CD8-positive, alpha-beta T cell (primary cell): ENCODE measurements at regions of chr5 and their contacts with region 1.

Region 1: GRCh38 chr5:33969572-33970452 is 14.7 kb downstream of the SLC45A2 start:
- DNase-seq: peak in 2 of 9 experiments; percentile 13 to 36
- ATAC-seq: no peak
- H3K4me3 ChIP-seq: no peak overlapping the region
- H3K4me3 Mint-ChIP-seq: no peak overlapping the region
- H3K27ac ChIP-seq: no peak overlapping the region
- H3K27ac Mint-ChIP-seq: no peak overlapping the region
- H3K4me1 ChIP-seq: no peaks in the 10 kb centered on the region
- H3K4me1 Mint-ChIP-seq: peaks cover 7% of the 10 kb centered on the region
- H3K27me3 ChIP-seq: no peaks in the 10 kb centered on the region
- H3K27me3 Mint-ChIP-seq: peaks cover under 1% of the 10 kb centered on the region
- CTCF ChIP-seq: peak; percentile 49

Region 2: DNA sequence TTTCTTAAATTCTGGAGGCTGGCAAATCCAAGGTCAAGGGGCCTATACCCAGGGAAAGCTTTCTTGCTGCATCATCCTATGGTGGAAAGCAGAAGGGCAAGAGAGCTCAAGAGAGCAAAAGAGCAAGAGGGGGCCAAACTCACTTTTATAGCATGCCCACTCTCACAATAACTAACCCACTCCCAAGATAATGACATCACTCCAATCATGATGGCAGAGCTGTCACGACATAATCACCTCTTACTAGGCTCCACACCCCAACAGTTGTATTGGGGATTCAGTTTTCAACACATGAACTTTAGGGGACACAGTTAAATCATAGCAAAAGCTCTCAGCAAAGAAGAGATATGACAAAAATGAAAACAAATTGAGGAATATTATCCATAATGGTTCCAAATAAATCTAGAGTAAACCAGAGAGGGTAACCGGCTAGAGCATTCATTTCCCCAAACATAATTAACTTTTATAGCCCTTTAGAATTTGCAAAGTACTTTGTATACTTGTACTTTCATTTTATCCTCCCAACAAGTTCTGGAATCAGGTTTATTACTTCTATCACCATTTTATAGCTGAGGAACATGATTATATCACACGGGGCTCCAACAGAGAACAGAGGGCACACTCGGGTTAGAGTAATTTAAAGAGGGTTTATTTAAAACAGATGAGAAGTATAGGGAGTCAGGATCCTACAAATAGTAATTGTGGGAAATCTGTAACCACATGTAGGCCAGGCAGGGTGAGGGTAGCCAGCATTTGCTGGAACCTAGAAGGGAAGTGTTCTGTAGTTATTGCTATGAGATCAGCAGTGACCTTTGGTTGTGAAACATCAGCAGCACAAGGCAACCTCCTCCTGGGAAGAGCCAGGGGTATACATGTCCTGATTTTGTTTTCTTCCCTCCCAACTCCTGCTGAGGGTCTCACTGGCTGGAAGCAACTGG is 536.2 kb before region 1 on chr5:
- CTCF ChIA-PET with region 1: interaction called, 21 read pairs
- POLR2A ChIA-PET with region 1: no interaction called
- intact Hi-C with region 1: loop called in 1 of 2 experiments (anchors 1 kb)
- DNase-seq: no peak
- ATAC-seq: no peak
- H3K4me3 ChIP-seq: no peak overlapping the region
- H3K4me3 Mint-ChIP-seq: no peak overlapping the region
- H3K27ac ChIP-seq: no peak overlapping the region
- H3K27ac Mint-ChIP-seq: no peak overlapping the region
- H3K4me1 ChIP-seq: no peaks in the 10 kb centered on the region
- H3K4me1 Mint-ChIP-seq: peaks cover 11% of the 10 kb centered on the region
- H3K27me3 ChIP-seq: no peaks in the 10 kb centered on the region
- H3K27me3 Mint-ChIP-seq: peaks cover 2% of the 10 kb centered on the region
- CTCF ChIP-seq: no peak

Region 3: GRCh38 chr5:33675958-33676464 is 293.8 kb before region 1 on chr5:
- CTCF ChIA-PET with region 1: no interaction called
- POLR2A ChIA-PET with region 1: no interaction called
- intact Hi-C with region 1: no loop called
- DNase-seq: no peak
- ATAC-seq: no peak
- H3K4me3 ChIP-seq: no peak overlapping the region
- H3K4me3 Mint-ChIP-seq: no peak overlapping the region
- H3K27ac ChIP-seq: no peak overlapping the region
- H3K27ac Mint-ChIP-seq: no peak overlapping the region
- H3K4me1 ChIP-seq: no peaks in the 10 kb centered on the region
- H3K4me1 Mint-ChIP-seq: no peaks in the 10 kb centered on the region
- H3K27me3 ChIP-seq: no peaks in the 10 kb centered on the region
- H3K27me3 Mint-ChIP-seq: no peaks in the 10 kb centered on the region
- CTCF ChIP-seq: no peak

Region 4: GRCh38 chr5:33981408-33982162 is 11.8 kb after region 1 on chr5:
- CTCF ChIA-PET with region 1: interaction called, 15 read pairs
- POLR2A ChIA-PET with region 1: no interaction called
- intact Hi-C with region 1: no loop called
- DNase-seq: no peak
- ATAC-seq: no peak
- H3K4me3 ChIP-seq: no peak overlapping the region
- H3K4me3 Mint-ChIP-seq: no peak overlapping the region
- H3K27ac ChIP-seq: no peak overlapping the region
- H3K27ac Mint-ChIP-seq: no peak overlapping the region
- H3K4me1 ChIP-seq: no peaks in the 10 kb centered on the region
- H3K4me1 Mint-ChIP-seq: no peaks in the 10 kb centered on the region
- H3K27me3 ChIP-seq: no peaks in the 10 kb centered on the region
- H3K27me3 Mint-ChIP-seq: no peaks in the 10 kb centered on the region
- CTCF ChIP-seq: no peak